MCF 10A (cell line): ENCODE measurements at regions of chr20 and their contacts with region 1.

Region 1: DNA sequence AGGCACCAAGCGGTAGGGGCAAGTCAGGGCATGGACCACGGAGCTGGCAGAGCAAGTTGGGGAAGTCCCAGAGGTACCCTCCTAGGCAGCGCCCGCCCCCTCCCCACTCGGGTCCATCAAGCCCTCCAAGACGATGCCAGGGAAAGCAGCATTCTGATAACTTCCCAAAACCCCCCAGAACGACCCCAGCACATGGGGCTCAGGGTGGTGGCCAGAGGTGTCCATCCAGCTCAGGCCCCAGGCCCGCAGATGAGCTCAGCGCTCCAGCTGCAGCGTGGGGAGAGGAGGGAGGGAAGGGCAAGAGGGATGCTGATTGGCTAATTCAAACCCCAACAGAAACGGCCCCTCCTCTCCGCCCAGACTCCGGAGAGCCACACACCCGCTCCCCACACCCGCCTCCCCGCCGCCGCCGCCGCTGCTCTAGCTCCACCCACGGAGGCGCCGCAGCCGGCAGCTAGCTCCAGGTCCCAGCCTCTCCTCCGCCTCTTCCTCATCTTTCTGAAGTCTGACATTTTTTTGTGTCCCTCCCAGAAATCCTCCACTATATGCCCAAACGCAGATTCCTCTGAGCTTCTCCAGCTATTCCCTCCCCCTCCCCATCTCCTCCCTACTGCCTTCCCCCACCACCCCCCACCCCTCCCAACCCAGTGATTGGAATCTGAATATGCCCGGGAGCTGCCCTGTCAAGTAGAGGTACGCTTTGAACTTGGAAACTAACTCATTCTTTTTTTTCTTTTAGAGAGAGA is 40.3 kb upstream of the TLDC2 start:
- DNase-seq: peak; percentile 94
- H3K4me3 Mint-ChIP-seq: peak overlapping the region; percentile 65
- H3K27ac Mint-ChIP-seq: peak overlapping the region; percentile 81
- H3K4me1 Mint-ChIP-seq: no peaks in the 10 kb centered on the region
- H3K27me3 Mint-ChIP-seq: no peaks in the 10 kb centered on the region
- CTCF ChIP-seq: no peak

Region 2: DNA sequence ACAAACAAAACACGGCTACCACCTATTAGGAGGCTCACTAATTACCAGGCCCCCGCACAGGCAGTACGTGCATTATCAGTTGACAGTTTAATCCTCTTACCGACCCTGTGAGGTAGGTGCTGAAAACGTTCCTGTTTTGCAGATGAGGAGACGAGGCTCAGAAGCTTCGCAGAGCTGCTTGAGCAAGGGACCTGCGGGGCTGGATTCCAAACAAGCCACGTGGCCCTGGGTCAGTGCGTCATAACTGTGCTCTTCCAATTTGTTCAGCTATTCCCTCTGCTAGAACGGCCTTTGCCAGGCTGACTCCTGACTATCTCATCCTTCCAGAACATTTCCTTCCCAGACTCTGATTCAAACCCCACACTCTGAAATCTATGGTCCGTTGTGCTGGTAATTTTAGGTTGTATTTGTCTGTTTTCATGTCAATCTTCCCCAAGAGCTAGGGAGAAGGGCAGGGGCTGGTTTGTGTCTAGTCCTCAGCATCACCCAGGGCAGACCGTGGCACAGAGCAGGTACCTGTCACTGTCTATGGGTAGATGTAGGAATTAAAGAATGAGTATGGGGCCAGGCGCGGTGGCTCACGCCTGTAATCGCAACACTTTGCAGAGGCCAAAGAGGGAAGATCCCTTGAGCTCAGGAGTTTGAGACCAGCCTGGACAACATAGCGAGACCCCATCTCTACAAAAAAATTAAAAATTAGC is 11.5 kb after region 1 on chr20:
- CTCF ChIA-PET with region 1: interaction called, 6 read pairs
- POLR2A ChIA-PET with region 1: interaction called, 22 read pairs
- intact Hi-C with region 1: no loop called
- DNase-seq: peak; percentile 86
- H3K4me3 Mint-ChIP-seq: peak overlapping the region; percentile 55
- H3K27ac Mint-ChIP-seq: peak overlapping the region; percentile 91
- H3K4me1 Mint-ChIP-seq: peaks cover 8% of the 10 kb centered on the region
- H3K27me3 Mint-ChIP-seq: no peaks in the 10 kb centered on the region
- CTCF ChIP-seq: no peak